ENCODE measurements at regions of chrX and their contacts with region 1.

Region 1: GRCh38 chrX:48816014-48816810 is 10.1 kb upstream of the ERAS start:
- DNase-seq: no peak
- H3K4me3 ChIP-seq: no peak overlapping the region
- H3K27ac ChIP-seq: no peak overlapping the region
- H3K4me1 ChIP-seq: no peaks in the 10 kb centered on the region
- H3K27me3 ChIP-seq: peaks cover 0 to 44% of the 10 kb centered on the region in 2 donors
- CTCF ChIP-seq: no peak
- POLR2A ChIP-seq: no peak

Region 2: GRCh38 chrX:48156014-48156413 is 660.2 kb before region 1 on chrX:
- intact Hi-C with region 1: loop called (anchors 5 kb)
- DNase-seq: no peak
- H3K4me3 ChIP-seq: no peak overlapping the region
- H3K27ac ChIP-seq: no peak overlapping the region
- H3K4me1 ChIP-seq: no peaks in the 10 kb centered on the region
- H3K27me3 ChIP-seq: peaks cover 0 to 21% of the 10 kb centered on the region in 2 donors
- CTCF ChIP-seq: no peak
- POLR2A ChIP-seq: no peak

Region 3: GRCh38 chrX:48801280-48802088 is 14.7 kb before region 1 on chrX and contains the start of gene HDAC6:
- intact Hi-C with region 1: no loop called
- DNase-seq: peak; percentile 95 to 97
- H3K4me3 ChIP-seq: peak within 1 kb of the TSS; percentile 54 to 77 (median 56)
- H3K27ac ChIP-seq: peak within 1 kb of the TSS; percentile 93 to 97
- H3K4me1 ChIP-seq: no peaks in the 10 kb centered on the region
- H3K27me3 ChIP-seq: peaks cover 0 to 20% of the 10 kb centered on the region in 2 donors
- CTCF ChIP-seq: no peak
- POLR2A ChIP-seq: no peak
- total RNA-seq, gene HDAC6: 78.2 to 86.2 (median 84.3) TPM